A549 (cell line): ENCODE measurements at regions of chr11 and their contacts with region 1.

Region 1: GRCh38 chr11:73965076-73965860 is 14.4 kb downstream of the DNAJB13 start:
- DNase-seq: peak in 1 of 2 experiments; percentile 31
- ATAC-seq: peak; percentile 56 to 66; a peak in 5 of 6 replicates
- H3K4me3 ChIP-seq: peak overlapping the region; percentile 37
- H3K27ac ChIP-seq: peak overlapping the region; percentile 55 to 62; a peak in 5 of 6 replicates
- H3K4me1 ChIP-seq: 0 out of 3 replicates have a peak, but pooled peaks cover 5% of the 10 kb centered on the region
- CTCF ChIP-seq: no peak
- EP300 ChIP-seq: no peak
- POLR2A ChIP-seq: no peak
- RAD21 ChIP-seq: peak in 1 of 2 experiments; percentile 39; a peak in 2 of 5 replicates

Region 2: GRCh38 chr11:73950869-73951710 is 14.2 kb before region 1 on chr11 and contains the start of gene DNAJB13:
- CTCF ChIA-PET with region 1: interaction called, 23 read pairs
- POLR2A ChIA-PET with region 1: no interaction called
- DNase-seq: peak; percentile 67 to 88
- ATAC-seq: peak; percentile 97 to 98
- H3K4me3 ChIP-seq: no peak within 1 kb of the TSS
- H3K27ac ChIP-seq: peak within 1 kb of the TSS in 1 of 2 experiments; percentile 63; a peak in 3 of 6 replicates
- H3K4me1 ChIP-seq: peaks cover 14% of the 10 kb centered on the region
- CTCF ChIP-seq: no peak
- EP300 ChIP-seq: no peak
- POLR2A ChIP-seq: no peak
- RAD21 ChIP-seq: no peak
- polyA plus RNA-seq, gene DNAJB13: 0.87 and 0.90 TPM in 2 replicates

Region 3: DNA sequence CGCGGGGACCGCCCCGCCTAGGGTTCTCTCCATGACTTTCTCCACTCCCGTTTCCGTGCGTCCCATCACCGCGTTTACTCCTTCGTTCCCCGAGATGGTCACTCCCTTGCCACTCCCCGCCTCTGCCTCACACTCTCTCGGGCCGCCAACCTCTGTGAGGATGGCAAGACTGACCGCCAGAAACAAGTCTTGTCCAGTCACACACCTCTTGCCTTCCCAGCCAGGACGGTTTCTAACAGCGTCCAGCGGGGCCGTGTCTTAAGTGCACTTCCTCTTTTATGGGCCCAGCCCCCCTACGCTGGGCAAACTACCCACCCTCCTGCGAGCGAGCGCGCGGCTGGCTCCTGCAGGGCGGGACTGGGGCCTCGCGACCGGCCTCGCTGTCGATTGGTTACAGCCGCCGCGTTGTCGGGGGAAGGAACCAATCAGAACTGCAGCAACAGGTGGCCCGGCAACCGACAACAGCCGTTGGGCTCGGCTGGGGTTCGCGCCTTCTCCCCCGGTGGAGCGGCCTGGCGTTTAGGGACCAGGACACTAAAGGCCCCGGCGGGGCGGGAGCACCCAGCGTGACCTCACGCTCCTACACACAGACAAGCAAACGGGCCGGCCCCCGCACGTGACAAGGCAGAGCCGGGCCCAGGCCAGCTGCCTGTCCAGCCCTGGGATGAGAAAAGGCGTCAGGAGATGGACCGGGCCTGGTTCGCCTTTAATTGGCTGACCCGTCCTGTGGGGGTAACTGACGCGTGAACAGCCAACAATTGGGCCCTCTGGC is 17.9 kb after region 1 on chr11:
- CTCF ChIA-PET with region 1: interaction called, 61 read pairs
- POLR2A ChIA-PET with region 1: interaction called, 6 read pairs
- DNase-seq: peak; percentile 98 to 99
- ATAC-seq: peak; percentile 93 to 94
- H3K4me3 ChIP-seq: peak overlapping the region; percentile 62
- H3K27ac ChIP-seq: peak overlapping the region; percentile 88 to 92
- H3K4me1 ChIP-seq: peaks cover 31% of the 10 kb centered on the region
- CTCF ChIP-seq: no peak
- EP300 ChIP-seq: no peak
- POLR2A ChIP-seq: no peak; the same call in none of the 2 replicates
- RAD21 ChIP-seq: no peak

Region 4: GRCh38 chr11:74090701-74091100 is 125.4 kb after region 1 on chr11:
- CTCF ChIA-PET with region 1: interaction called, 11 read pairs
- POLR2A ChIA-PET with region 1: no interaction called
- DNase-seq: peak in 1 of 2 experiments; percentile 51
- ATAC-seq: peak; percentile 74 to 79; a peak in 5 of 6 replicates
- H3K4me3 ChIP-seq: no peak overlapping the region
- H3K27ac ChIP-seq: no peak overlapping the region
- H3K4me1 ChIP-seq: peaks cover 8% of the 10 kb centered on the region
- CTCF ChIP-seq: peak; percentile 30; the same call in 2 of the 3 replicates
- EP300 ChIP-seq: no peak
- POLR2A ChIP-seq: no peak
- RAD21 ChIP-seq: peak; percentile 51 to 62; a peak in 4 of 5 replicates